ENCODE measurements at regions of chr5 and their contacts with region 1.

Region 1: DNA sequence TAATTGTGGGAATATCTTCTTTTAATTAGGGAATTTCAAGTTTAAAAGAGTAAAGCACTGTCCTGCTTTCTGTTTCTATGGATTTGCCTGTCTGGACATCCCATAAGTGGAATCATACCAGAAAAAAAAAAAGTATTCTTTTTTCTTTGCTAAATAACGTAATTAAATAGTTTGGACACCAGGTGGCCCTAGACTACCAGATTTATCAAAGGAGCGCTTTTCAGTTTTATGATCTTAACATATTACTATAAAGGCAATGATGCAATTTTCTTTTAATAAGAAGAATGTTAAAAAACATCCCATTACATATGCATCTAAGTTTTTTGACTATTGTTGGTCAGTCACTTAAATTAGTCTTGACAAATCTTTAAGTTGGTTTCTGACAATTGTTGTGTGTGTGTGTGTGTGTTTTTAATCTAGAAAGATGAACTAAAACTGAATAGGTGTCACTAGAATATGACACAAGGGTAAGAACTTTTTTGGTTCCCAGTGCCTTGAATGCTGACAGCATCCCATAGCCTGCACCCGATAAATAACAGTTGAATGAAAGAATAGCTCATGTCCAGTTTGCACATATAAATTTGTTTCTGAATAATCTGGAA is 49.5 kb downstream of the C5orf22 start:
- DNase-seq: no peak
- H3K4me3 ChIP-seq: no peak overlapping the region
- H3K27ac ChIP-seq: no peak overlapping the region
- H3K4me1 ChIP-seq: no peaks in the 10 kb centered on the region
- H3K27me3 ChIP-seq: no peaks in the 10 kb centered on the region
- CTCF ChIP-seq: peak; percentile 24 to 47 (median 38)
- EP300 ChIP-seq: no peak
- POLR2A ChIP-seq: no peak

Region 2: GRCh38 chr5:31377274-31377946 is 204.2 kb before region 1 on chr5:
- intact Hi-C with region 1: no loop called
- DNase-seq: no peak
- H3K4me3 ChIP-seq: no peak overlapping the region
- H3K27ac ChIP-seq: no peak overlapping the region
- H3K4me1 ChIP-seq: no peaks in the 10 kb centered on the region
- H3K27me3 ChIP-seq: no peaks in the 10 kb centered on the region
- CTCF ChIP-seq: no peak
- EP300 ChIP-seq: no peak
- POLR2A ChIP-seq: no peak

Region 3: GRCh38 chr5:31809050-31809870 is 227.7 kb after region 1 on chr5:
- intact Hi-C with region 1: loop called in 3 of 4 experiments (anchors 5 kb)
- DNase-seq: peak; percentile 48 to 73 (median 56)
- H3K4me3 ChIP-seq: no peak overlapping the region
- H3K27ac ChIP-seq: no peak overlapping the region
- H3K4me1 ChIP-seq: no peaks in the 10 kb centered on the region
- H3K27me3 ChIP-seq: no peaks in the 10 kb centered on the region
- CTCF ChIP-seq: peak; percentile 16 to 57 (median 23)
- EP300 ChIP-seq: no peak
- POLR2A ChIP-seq: no peak

Region 4: DNA sequence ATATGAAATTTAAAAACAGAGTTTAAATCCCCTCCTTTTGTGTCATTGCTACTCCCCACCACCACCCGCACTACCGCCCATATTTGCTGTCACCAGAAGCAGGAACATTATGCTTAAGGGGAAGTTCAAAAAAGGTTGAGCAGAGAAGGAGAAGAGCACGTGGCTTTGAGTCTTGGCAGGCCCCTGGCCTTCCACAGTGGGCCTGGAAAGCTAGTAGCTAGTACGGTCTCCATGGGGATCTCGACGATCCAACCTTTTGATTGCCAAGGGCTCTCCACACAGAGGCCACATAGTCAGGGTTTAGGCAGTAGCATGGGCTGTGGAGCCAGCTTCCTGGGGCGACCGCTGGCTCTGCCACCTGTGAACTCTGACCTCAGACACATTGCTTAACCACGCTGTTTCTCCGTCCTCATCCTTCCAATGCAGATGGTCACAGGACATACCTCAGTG is 502.4 kb after region 1 on chr5:
- intact Hi-C with region 1: loop called in 1 of 4 experiments (anchors 10 kb)
- DNase-seq: no peak
- H3K4me3 ChIP-seq: no peak overlapping the region
- H3K27ac ChIP-seq: no peak overlapping the region
- H3K4me1 ChIP-seq: no peaks in the 10 kb centered on the region
- H3K27me3 ChIP-seq: no peaks in the 10 kb centered on the region
- CTCF ChIP-seq: no peak
- EP300 ChIP-seq: no peak
- POLR2A ChIP-seq: no peak

Region 5: DNA sequence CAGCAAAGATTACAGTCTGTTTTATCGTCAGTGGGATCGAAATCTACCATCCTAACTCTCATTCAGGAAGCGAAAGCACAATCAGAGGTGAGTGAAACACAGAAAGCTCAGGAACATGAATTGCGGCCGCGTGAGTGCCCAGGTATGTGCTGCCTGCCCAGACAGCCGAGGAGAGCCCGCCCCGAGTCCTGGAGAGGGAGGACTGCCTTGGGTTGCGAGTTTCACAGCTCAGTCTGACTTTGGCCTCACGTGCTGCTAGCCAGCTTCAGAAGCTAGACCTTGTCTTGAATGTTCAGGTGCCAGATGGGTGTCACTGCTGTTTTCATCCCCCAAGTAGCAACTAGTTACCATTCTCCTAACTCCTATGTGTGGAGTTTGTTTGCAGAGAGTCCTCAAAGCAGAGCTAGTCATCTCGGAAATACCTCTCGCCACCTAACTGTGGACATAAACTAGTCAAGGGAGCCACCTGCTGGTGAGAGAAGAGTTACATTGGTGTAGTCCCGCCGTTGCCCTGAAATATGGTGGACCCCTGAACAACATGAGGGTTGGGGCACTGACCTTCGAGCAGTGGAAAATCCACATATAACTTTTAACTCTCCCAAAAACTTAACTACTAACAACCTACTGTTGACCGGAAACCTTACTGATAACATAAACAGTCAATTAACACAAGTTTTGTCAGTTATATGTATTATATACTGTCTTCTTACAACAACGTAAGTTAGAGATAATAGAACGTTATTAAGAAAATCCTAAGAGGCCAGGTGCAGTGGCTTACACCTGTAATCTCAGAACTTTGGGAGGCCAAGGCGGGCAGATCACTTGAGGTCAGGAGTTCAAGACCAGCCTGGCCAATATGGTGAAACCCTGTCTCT is 511.6 kb after region 1 on chr5:
- intact Hi-C with region 1: loop called in 3 of 4 experiments (anchors 5 to 10 kb)
- DNase-seq: peak; percentile 59 to 83 (median 73)
- H3K4me3 ChIP-seq: no peak overlapping the region
- H3K27ac ChIP-seq: no peak overlapping the region
- H3K4me1 ChIP-seq: peaks cover 22% of the 10 kb centered on the region
- H3K27me3 ChIP-seq: no peaks in the 10 kb centered on the region
- CTCF ChIP-seq: peak; percentile 32 to 90 (median 87)
- EP300 ChIP-seq: no peak
- POLR2A ChIP-seq: no peak

Region 6: DNA sequence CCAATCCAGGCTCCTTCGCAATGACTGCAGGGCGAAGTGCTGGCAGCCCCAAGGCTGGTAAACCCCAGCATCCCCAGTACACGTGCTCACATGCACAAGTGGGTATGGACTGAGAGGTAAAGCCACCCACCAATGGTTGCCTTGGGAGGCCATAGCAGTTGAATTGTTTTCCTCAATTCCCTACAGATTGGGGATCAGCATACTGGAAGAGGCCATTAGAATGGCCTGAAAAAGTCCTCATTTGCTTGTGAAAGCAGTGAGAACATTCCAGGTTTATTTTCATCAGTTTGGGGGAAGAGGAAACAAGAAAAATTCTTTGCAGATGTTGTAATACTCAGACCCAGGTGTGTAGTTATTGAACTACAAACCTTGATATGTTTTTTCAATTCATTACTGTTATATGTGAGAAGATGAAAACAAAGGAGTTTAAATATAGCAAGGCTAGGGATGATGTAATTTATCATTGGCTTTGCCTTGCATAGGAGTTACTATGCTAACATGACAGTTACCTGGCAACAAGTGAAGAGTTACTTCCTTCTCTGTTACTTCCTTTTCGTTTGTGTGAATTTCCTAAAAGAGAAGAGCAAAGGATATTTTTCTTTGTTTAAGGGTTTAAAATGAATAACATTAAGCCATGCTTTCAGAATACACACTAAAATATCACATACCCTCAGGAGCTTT is 694.7 kb after region 1 on chr5:
- intact Hi-C with region 1: no loop called
- DNase-seq: no peak
- H3K4me3 ChIP-seq: no peak overlapping the region
- H3K27ac ChIP-seq: no peak overlapping the region
- H3K4me1 ChIP-seq: peaks cover 12% of the 10 kb centered on the region
- H3K27me3 ChIP-seq: no peaks in the 10 kb centered on the region
- CTCF ChIP-seq: no peak
- EP300 ChIP-seq: no peak
- POLR2A ChIP-seq: no peak